ENCODE measurements at regions of chr2 and their contacts with region 1.

Region 1: GRCh38 chr2:195559431-195559914 is 97.6 kb upstream of the SLC39A10 start:
- DNase-seq: peak; percentile 97
- H3K4me3 ChIP-seq: peak overlapping the region; percentile 38
- H3K27ac ChIP-seq: peak overlapping the region; percentile 95
- H3K4me1 ChIP-seq: peaks cover 68% of the 10 kb centered on the region
- CTCF ChIP-seq: no peak

Region 2: DNA sequence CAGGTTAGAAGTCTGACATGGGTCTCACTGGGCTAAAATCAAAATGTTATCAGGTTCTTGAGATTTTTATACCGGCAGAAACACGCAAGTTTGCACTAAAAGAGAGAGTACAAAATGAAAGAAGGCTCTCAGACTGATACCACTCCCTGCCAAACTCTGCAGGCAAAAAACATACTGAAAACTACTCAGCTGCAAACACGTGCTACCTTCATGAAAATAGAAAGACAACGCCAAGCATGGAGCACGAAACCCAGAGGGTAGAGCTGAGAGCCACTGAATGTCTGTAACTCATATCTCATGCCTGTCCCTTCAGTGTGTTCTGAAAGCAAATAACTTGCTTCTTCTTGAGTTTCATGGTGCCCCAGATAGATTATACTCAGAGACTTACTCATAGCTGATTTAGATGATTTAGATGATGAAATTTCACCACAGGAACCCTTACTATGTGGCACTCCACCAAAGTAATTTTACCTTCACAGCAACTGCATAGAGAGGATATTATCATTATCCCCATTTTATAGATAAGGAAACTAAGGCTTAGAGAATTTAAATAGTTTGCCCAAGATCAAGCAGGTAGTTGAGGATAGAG is 215.4 kb before region 1 on chr2:
- CTCF ChIA-PET with region 1: no interaction called
- POLR2A ChIA-PET with region 1: no interaction called
- intact Hi-C with region 1: loop called (anchors 5 kb)
- DNase-seq: no peak
- H3K4me3 ChIP-seq: peak overlapping the region; percentile 18
- H3K27ac ChIP-seq: no peak overlapping the region
- H3K4me1 ChIP-seq: peaks cover 23% of the 10 kb centered on the region
- CTCF ChIP-seq: no peak

Region 3: GRCh38 chr2:195533771-195534642 is 25.5 kb before region 1 on chr2:
- CTCF ChIA-PET with region 1: no interaction called
- POLR2A ChIA-PET with region 1: interaction called, 19 read pairs
- intact Hi-C with region 1: loop called (anchors 2 kb)
- DNase-seq: peak; percentile 39
- H3K4me3 ChIP-seq: peak overlapping the region; percentile 64
- H3K27ac ChIP-seq: no peak overlapping the region
- H3K4me1 ChIP-seq: peaks cover 47% of the 10 kb centered on the region
- CTCF ChIP-seq: peak; percentile 53

Region 4: DNA sequence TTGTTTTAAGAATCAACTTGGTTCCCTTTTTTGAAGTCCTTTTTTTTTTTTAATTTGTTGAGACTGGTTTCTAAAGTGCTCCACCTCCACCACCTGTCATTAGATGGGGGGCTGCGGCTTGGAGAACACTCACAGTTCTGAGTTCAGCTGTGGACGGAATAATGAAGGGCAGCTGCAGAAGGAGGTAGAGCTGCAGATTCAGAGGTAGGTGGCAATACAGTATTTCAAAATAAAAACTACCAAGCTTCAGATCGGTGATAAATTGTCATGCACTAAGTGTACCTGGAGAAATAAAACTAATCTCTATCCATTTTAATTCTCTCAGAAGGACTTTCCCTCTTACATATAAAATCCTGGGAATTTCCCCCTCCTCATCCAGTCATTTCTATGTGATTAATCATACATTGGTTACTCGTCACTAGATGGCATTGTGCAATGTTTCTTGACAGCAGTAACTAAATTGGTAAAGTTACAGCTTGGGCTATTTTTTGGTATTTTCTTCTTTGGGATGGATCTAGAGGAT is 16.5 kb after region 1 on chr2:
- CTCF ChIA-PET with region 1: interaction called, 3 read pairs
- POLR2A ChIA-PET with region 1: interaction called, 32 read pairs
- intact Hi-C with region 1: no loop called
- DNase-seq: peak; percentile 80
- H3K4me3 ChIP-seq: peak overlapping the region; percentile 17
- H3K27ac ChIP-seq: peak overlapping the region; percentile 37
- H3K4me1 ChIP-seq: peaks cover 39% of the 10 kb centered on the region
- CTCF ChIP-seq: peak; percentile 90

Region 5: DNA sequence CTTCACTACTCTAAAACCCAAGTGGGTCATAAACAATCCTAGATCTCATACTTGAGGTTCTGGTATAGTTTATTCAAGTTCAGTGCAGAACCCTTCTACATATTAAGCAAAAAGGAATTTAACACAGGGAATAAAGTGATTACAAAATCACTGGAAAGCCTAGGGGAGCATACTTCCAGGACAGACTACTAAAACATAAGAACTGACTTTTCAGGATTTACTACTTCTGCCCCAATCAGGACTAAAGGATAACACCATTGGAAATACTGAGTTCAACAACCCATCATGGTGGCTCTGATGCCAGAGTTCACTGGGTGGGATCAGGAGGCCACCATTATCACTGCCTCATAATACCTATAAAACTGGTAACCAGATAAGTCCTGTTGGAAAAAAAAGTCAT is 385.6 kb after region 1 on chr2:
- CTCF ChIA-PET with region 1: no interaction called
- POLR2A ChIA-PET with region 1: no interaction called
- intact Hi-C with region 1: no loop called
- DNase-seq: no peak
- H3K4me3 ChIP-seq: no peak overlapping the region
- H3K27ac ChIP-seq: no peak overlapping the region
- H3K4me1 ChIP-seq: no peaks in the 10 kb centered on the region
- CTCF ChIP-seq: no peak